ENCODE measurements at regions of chr22 and their contacts with region 1.

Region 1: GRCh38 chr22:41925655-41926460 is 748 bp downstream of the TNFRSF13C start:
- DNase-seq: peak; percentile 73 to 92
- H3K4me3 ChIP-seq: peak overlapping the region; percentile 27
- H3K4me3 Mint-ChIP-seq: peak overlapping the region; percentile 77
- H3K27ac Mint-ChIP-seq: no peak overlapping the region
- H3K4me1 ChIP-seq: no peaks in the 10 kb centered on the region
- H3K4me1 Mint-ChIP-seq: no peaks in the 10 kb centered on the region
- H3K27me3 ChIP-seq: no peaks in the 10 kb centered on the region
- H3K27me3 Mint-ChIP-seq: no peaks in the 10 kb centered on the region
- CTCF ChIP-seq: peak; percentile 75 to 77

Region 2: GRCh38 chr22:41746567-41747400 is 179.1 kb before region 1 on chr22:
- CTCF ChIA-PET with region 1: interaction called, 10 read pairs
- POLR2A ChIA-PET with region 1: interaction called, 15 read pairs
- intact Hi-C with region 1: no loop called
- DNase-seq: peak; percentile 80 to 84
- H3K4me3 ChIP-seq: no peak overlapping the region
- H3K4me3 Mint-ChIP-seq: no peak overlapping the region
- H3K27ac Mint-ChIP-seq: no peak overlapping the region
- H3K4me1 ChIP-seq: no peaks in the 10 kb centered on the region
- H3K4me1 Mint-ChIP-seq: no peaks in the 10 kb centered on the region
- H3K27me3 ChIP-seq: no peaks in the 10 kb centered on the region
- H3K27me3 Mint-ChIP-seq: peaks cover 3% of the 10 kb centered on the region
- CTCF ChIP-seq: peak; percentile 62 to 91

Region 3: GRCh38 chr22:41915035-41915785 is 10.6 kb before region 1 on chr22 and contains the start of gene SHISA8:
- CTCF ChIA-PET with region 1: interaction called, 13 read pairs
- POLR2A ChIA-PET with region 1: no interaction called
- intact Hi-C with region 1: no loop called
- DNase-seq: peak; percentile 28 to 62
- H3K4me3 ChIP-seq: peak within 1 kb of the TSS; percentile 42
- H3K4me3 Mint-ChIP-seq: peak within 1 kb of the TSS; percentile 64
- H3K27ac Mint-ChIP-seq: no peak within 1 kb of the TSS
- H3K4me1 ChIP-seq: no peaks in the 10 kb centered on the region
- H3K4me1 Mint-ChIP-seq: peaks cover 7% of the 10 kb centered on the region
- H3K27me3 ChIP-seq: no peaks in the 10 kb centered on the region; the same call in 1 of the 2 replicates
- H3K27me3 Mint-ChIP-seq: peaks cover 22% of the 10 kb centered on the region
- CTCF ChIP-seq: no peak
- total RNA-seq, gene SHISA8: 1.4 and 2.2 TPM in 2 replicates

Region 4: DNA sequence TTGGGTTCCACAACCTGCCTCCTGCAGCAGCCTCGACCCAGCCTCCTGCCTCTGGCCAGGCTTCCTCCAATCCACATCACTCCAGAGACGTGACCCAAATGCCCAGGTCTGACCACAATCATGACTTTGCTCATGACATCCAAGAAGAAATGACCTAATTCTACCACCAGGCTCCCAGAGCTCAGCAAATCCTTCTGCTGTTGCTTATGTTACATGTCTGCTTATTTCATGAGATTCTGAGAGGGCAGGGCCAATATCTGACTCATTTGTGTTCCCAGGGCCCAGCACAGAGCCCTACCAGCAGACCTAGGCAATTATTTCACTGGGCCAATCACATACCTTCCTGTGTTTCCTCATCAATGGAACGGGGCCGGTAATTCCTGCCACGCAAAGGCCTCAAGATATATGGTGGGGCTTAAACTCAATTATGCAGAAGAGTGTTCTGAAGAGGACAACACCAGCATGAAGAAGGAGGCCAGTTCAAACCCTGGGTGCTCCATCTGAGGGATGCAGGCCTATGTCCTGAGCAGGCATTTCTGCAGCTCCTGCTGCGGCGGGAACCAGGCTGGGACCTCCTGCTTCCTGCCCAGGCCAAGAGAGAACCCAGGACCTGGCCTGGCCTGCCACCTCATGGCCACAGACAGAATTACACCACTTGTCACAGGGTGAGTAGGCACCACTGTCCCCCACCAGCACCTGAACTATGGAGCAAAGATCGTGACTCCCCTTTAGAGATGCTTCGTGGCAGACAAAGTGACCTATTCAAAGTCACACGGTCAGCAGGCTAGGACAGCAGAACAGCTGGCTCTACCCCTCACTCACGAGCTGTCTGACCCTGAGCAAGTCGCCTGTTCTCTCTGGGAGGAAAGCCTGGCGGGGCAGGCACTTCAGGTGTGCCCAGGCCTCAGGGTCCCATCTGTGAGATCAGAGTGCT is 15.2 kb after region 1 on chr22:
- CTCF ChIA-PET with region 1: interaction called, 17 read pairs
- POLR2A ChIA-PET with region 1: interaction called, 3 read pairs
- intact Hi-C with region 1: loop called (anchors 1 kb)
- DNase-seq: peak; percentile 80 to 87
- H3K4me3 ChIP-seq: no peak overlapping the region
- H3K4me3 Mint-ChIP-seq: no peak overlapping the region
- H3K27ac Mint-ChIP-seq: no peak overlapping the region
- H3K4me1 ChIP-seq: no peaks in the 10 kb centered on the region
- H3K4me1 Mint-ChIP-seq: peaks cover 7% of the 10 kb centered on the region
- H3K27me3 ChIP-seq: no peaks in the 10 kb centered on the region
- H3K27me3 Mint-ChIP-seq: no peaks in the 10 kb centered on the region
- CTCF ChIP-seq: peak; percentile 82 to 85

Region 5: GRCh38 chr22:41946629-41947423 is 21.0 kb after region 1 on chr22 and contains the start of gene CENPM:
- CTCF ChIA-PET with region 1: interaction called, 16 read pairs
- POLR2A ChIA-PET with region 1: interaction called, 15 read pairs
- intact Hi-C with region 1: loop called (anchors 1 kb)
- DNase-seq: peak; percentile 96 to 97
- H3K4me3 ChIP-seq: peak within 1 kb of the TSS; percentile 47
- H3K4me3 Mint-ChIP-seq: peak within 1 kb of the TSS; percentile 93
- H3K27ac Mint-ChIP-seq: peak within 1 kb of the TSS; percentile 81
- H3K4me1 ChIP-seq: peaks cover 11% of the 10 kb centered on the region
- H3K4me1 Mint-ChIP-seq: peaks cover 13% of the 10 kb centered on the region
- H3K27me3 ChIP-seq: no peaks in the 10 kb centered on the region
- H3K27me3 Mint-ChIP-seq: no peaks in the 10 kb centered on the region
- CTCF ChIP-seq: peak in 1 of 2 experiments; percentile 6
- total RNA-seq, gene CENPM: 44.1 and 46.4 TPM in 2 replicates

Region 6: GRCh38 chr22:41976401-41976901 is 50.6 kb after region 1 on chr22:
- CTCF ChIA-PET with region 1: no interaction called
- POLR2A ChIA-PET with region 1: no interaction called
- intact Hi-C with region 1: no loop called
- DNase-seq: peak in 1 of 2 experiments; percentile 63
- H3K4me3 ChIP-seq: peak overlapping the region; percentile 56
- H3K4me3 Mint-ChIP-seq: peak overlapping the region; percentile 11
- H3K27ac Mint-ChIP-seq: no peak overlapping the region
- H3K4me1 ChIP-seq: no peaks in the 10 kb centered on the region
- H3K4me1 Mint-ChIP-seq: no peaks in the 10 kb centered on the region
- H3K27me3 ChIP-seq: no peaks in the 10 kb centered on the region; the same call in none of the 2 replicates
- H3K27me3 Mint-ChIP-seq: peaks cover 21% of the 10 kb centered on the region
- CTCF ChIP-seq: no peak

Region 7: DNA sequence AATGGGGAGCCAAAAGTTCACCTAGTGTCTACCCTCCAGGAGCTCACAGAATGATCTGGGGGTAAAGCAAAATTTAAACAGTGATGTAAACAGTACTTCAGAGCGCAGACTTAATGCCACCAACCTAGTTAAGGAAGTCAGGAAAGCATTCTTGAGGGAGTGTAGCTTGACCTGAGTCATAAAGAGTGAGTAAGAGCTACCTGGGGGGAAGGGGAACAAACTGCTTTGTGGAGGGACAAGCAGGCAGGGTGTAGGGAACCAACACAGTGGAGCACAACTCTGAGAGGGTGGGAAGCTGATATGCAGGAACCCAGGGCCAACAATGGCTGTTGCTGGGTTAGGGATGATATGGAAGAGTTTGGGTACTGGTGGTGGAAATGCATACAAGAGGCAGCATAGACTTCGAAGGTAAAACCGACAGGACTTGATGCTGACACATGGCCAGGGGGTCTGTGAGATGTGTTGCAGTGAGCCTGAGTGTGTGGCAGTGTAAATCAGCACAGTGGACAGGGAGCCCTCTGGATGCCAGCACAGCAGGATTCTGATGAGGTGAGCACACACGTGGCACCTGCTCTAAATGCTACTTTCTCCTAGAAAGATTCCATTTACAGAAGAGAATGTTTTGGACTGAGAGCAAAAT is 263.1 kb after region 1 on chr22:
- CTCF ChIA-PET with region 1: no interaction called
- POLR2A ChIA-PET with region 1: interaction called, 13 read pairs
- intact Hi-C with region 1: no loop called
- DNase-seq: no peak
- H3K4me3 ChIP-seq: no peak overlapping the region
- H3K4me3 Mint-ChIP-seq: no peak overlapping the region
- H3K27ac Mint-ChIP-seq: no peak overlapping the region
- H3K4me1 ChIP-seq: peaks cover 2% of the 10 kb centered on the region; the same call in 1 of the 2 replicates
- H3K4me1 Mint-ChIP-seq: peaks cover 14% of the 10 kb centered on the region
- H3K27me3 ChIP-seq: no peaks in the 10 kb centered on the region
- H3K27me3 Mint-ChIP-seq: no peaks in the 10 kb centered on the region
- CTCF ChIP-seq: no peak